A673 (cell line): ENCODE measurements at regions of chr12 and their contacts with region 1.

Region 1: GRCh38 chr12:27014085-27014858 is at the start of gene TM7SF3:
- DNase-seq: peak; percentile 95
- H3K4me3 ChIP-seq: peak within 1 kb of the TSS; percentile 92
- H3K27ac ChIP-seq: peak within 1 kb of the TSS; percentile 71
- H3K4me1 ChIP-seq: peaks cover 9% of the 10 kb centered on the region
- H3K27me3 ChIP-seq: no peaks in the 10 kb centered on the region
- CTCF ChIP-seq: peak; percentile 82
- total RNA-seq, gene TM7SF3: 51.1 and 53.5 TPM in 2 replicates

Region 2: DNA sequence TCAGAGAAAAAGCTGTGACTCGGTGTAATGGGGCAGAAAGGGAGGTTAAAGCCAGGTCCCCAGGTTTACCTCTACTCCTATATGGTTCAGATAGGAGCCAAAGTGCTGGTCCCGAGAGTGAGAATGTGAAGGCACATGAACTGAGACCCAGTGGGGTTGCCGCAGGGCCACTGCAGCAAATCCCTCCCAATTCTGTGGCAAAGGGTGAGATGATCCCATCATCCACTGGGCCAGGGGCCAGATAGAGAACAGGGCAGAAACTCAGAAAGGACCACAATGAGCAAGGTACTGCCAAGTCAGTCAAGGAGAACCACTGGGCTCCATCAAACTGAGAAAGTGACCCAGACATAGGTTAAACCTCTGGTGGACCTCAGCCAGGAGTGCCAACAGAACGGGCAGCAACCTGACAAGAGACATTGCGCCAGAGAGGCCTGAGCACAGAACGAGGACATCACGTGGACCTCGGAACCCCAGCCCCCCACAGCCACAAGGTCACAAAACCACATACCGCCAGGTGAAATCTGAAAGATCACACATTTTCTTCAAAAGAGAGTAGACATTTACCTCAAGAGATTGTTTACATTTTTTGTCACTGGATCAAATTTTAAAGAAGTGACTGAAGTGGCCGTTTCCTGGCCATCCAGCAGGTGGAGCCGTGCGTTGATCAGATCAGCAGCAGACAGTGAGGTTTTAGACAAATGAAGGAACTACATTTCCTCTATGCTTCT is 160.8 kb before region 1 on chr12:
- CTCF ChIA-PET with region 1: no interaction called
- POLR2A ChIA-PET with region 1: interaction called, 3 read pairs
- intact Hi-C with region 1: loop called (anchors 2 kb)
- DNase-seq: peak; percentile 66
- H3K4me3 ChIP-seq: no peak overlapping the region
- H3K27ac ChIP-seq: no peak overlapping the region
- H3K4me1 ChIP-seq: peaks cover 6% of the 10 kb centered on the region
- H3K27me3 ChIP-seq: no peaks in the 10 kb centered on the region
- CTCF ChIP-seq: peak; percentile 95

Region 3: DNA sequence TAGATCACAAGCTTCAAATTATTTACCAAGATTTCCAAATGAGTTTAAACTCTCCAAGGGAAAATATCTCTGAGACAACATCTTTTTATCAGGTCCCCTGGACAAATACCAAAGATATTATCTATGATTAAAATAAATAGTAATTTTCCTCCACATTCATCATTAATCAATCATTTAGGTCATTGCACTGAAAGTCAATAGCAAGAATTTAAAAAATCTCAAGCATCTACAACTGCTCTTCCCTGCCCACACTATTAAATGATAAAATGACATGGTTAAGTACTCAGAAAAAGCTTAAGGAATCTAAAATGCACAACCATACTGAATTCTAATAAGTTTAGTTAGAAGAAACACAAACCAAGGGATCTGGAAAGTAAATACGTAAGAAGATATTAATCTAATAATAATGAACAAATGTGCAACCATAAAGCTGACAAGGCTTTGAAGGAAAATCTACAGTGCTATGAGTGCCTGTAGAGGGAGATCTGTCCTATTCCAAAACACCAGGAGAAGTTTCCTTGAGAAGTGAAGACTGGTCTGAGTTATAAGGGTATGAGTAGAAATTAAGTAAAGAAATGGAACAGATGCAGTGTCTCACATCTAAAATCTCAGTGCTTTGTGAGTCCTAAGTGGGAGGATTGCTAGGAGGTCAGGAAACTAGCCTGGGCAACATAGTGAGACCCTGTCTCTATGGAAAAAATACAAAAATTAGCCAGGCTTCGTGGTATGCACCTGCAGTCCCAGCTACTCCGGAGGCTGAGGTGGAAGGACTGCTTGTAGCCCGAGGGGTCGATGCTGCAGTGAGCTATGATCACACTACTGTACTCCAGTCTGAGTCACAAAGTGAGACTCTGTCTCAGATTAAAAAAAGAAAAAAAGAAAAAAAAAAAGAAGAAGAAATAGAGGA is 95.7 kb before region 1 on chr12:
- CTCF ChIA-PET with region 1: no interaction called
- POLR2A ChIA-PET with region 1: no interaction called
- intact Hi-C with region 1: loop called (anchors 5 kb)
- DNase-seq: peak; percentile 4
- H3K4me3 ChIP-seq: no peak overlapping the region
- H3K27ac ChIP-seq: peak overlapping the region; percentile 30
- H3K4me1 ChIP-seq: peaks cover 4% of the 10 kb centered on the region
- H3K27me3 ChIP-seq: no peaks in the 10 kb centered on the region
- CTCF ChIP-seq: 0 out of 2 replicates have a peak, but pooled peaks have one; percentile 37

Region 4: GRCh38 chr12:26937875-26938700 is 76.2 kb before region 1 on chr12 and contains the starts of genes FGFR1OP2 and INTS13:
- CTCF ChIA-PET with region 1: no interaction called
- POLR2A ChIA-PET with region 1: no interaction called
- intact Hi-C with region 1: loop called (anchors 5 kb)
- DNase-seq: peak; percentile 99
- H3K4me3 ChIP-seq: peak within 1 kb of the TSS; percentile 79
- H3K27ac ChIP-seq: peak within 1 kb of the TSS; percentile 93
- H3K4me1 ChIP-seq: peaks cover 19% of the 10 kb centered on the region
- H3K27me3 ChIP-seq: no peaks in the 10 kb centered on the region
- CTCF ChIP-seq: no peak
- total RNA-seq, gene FGFR1OP2: 40.3 and 42.3 TPM in 2 replicates
- total RNA-seq, gene INTS13: 39.9 and 51.0 TPM in 2 replicates

Region 5: DNA sequence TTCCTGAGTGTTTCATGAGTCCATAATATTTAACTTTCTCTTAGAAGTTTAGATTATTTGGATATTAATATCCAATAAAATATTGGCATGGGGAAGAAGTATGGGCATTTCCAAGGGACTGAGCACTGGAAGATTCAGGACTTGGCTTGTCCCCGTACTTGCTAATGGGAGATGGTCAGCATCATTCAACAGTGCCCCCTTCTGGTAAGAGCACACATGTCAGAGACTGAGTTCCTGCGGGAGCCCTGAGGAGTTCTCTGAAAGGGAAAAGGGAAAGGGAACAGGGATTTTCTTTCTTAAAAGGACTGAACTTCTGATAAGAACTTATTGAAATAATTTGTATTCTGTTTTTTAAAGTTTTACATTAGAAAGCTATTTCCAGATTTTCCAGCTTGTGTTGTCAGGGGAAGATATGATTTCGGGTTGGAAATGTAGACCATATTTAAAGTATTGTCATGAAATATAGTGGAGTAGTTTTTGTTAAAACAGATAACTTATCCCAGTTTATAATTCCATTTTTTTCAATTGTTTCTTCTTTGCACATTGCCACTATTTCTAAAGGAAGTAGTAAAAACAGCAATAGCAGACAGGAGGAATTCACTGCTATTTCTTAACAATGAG is 127.9 kb after region 1 on chr12:
- CTCF ChIA-PET with region 1: interaction called, 4 read pairs
- POLR2A ChIA-PET with region 1: no interaction called
- intact Hi-C with region 1: loop called (anchors 1 kb)
- DNase-seq: peak; percentile 80
- H3K4me3 ChIP-seq: no peak overlapping the region
- H3K27ac ChIP-seq: no peak overlapping the region
- H3K4me1 ChIP-seq: no peaks in the 10 kb centered on the region
- H3K27me3 ChIP-seq: no peaks in the 10 kb centered on the region
- CTCF ChIP-seq: peak; percentile 94

Region 6: DNA sequence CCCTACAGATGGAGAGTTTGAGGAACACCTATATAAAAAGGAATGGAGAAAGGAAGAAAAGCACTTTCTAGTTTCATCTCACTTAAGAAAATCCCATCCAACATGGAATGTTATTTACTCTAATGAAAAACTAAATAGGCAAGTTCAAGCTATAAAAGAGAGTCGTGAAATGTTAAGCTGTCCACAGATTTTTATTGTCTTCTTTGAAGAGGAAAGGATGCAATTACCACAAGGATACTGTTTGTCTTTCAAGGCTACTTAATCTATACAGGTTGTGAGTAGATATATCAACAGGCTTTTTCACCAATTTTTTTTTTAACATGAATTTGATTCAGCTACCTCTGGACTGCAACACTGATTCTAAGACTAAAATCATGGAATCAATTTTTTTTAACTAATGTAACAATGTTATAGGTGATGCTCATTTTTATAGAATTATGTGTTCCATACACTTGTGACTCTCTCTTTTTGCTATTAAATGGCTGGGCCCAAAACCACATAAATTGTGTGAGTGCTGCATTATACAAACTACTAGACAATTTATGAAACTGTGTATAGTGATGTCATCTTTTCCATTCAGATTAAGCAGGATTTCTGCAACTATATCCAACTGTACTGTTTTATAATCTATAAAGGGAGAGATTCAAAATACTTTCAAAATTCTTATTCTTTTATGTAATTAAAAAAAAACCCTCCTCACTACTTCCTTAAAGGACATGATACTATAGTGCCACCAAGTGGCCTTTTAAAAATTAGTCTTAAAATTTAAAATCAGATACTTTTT is 291.6 kb after region 1 on chr12:
- CTCF ChIA-PET with region 1: interaction called, 32 read pairs
- POLR2A ChIA-PET with region 1: no interaction called
- intact Hi-C with region 1: loop called (anchors 2 kb)
- DNase-seq: peak; percentile 48
- H3K4me3 ChIP-seq: no peak overlapping the region
- H3K27ac ChIP-seq: no peak overlapping the region
- H3K4me1 ChIP-seq: no peaks in the 10 kb centered on the region
- H3K27me3 ChIP-seq: no peaks in the 10 kb centered on the region
- CTCF ChIP-seq: peak; percentile 66; the same call in 1 of the 2 replicates

Region 7: GRCh38 chr12:27703710-27704452 is 689.6 kb after region 1 on chr12:
- CTCF ChIA-PET with region 1: interaction called, 4 read pairs
- POLR2A ChIA-PET with region 1: no interaction called
- intact Hi-C with region 1: loop called (anchors 10 kb)
- DNase-seq: peak; percentile 89
- H3K4me3 ChIP-seq: no peak overlapping the region
- H3K27ac ChIP-seq: peak overlapping the region; percentile 17
- H3K4me1 ChIP-seq: no peaks in the 10 kb centered on the region
- H3K27me3 ChIP-seq: no peaks in the 10 kb centered on the region
- CTCF ChIP-seq: peak; percentile 94